ENCODE measurements at regions of chr14 and their contacts with region 1.

Region 1: DNA sequence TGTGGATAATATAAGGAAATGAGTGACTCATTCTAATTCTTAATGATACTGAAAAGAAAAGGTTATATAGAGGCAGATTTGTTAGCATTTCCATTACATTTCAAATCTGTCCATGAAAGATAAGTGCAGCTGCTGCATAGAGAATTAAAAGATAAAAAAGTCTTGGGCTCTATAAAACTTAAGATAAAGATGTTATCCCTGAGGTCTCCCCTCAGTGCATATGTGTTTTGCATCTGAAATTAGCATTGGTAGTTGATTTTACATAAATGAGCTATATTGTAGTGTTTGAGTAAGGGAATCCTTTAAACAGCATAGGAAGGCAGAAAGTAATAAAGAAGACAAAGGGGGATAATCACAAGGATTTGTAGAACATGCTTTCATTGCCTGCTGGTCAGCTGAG is 206.2 kb downstream of the FSCB start:
- DNase-seq: no peak
- H3K4me3 ChIP-seq: no peak overlapping the region
- H3K27ac ChIP-seq: no peak overlapping the region
- H3K4me1 ChIP-seq: no peaks in the 10 kb centered on the region
- H3K27me3 ChIP-seq: no peaks in the 10 kb centered on the region
- CTCF ChIP-seq: no peak
- EP300 ChIP-seq: no peak
- POLR2A ChIP-seq: no peak

Region 2: DNA sequence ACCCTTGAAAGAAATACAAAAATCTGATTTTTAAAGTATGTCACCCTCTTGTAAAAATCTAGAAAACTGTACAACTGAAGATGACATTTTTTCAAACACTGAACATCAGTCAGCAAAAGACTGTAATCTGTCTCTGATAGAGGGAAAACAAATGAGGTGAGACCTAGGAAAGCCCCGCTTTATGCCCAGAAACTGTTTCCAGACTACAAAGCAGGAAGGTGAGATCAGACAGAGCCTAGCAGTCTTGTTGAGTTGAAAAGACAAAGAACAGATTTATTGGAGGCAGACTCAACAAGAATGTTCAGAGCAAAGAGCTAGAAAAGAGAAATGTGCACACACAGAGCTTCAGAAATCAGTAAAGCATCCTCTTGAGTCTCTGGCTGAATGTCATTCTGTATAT is 1820.7 kb before region 1 on chr14:
- intact Hi-C with region 1: no loop called
- DNase-seq: no peak
- H3K4me3 ChIP-seq: no peak overlapping the region
- H3K27ac ChIP-seq: no peak overlapping the region
- H3K4me1 ChIP-seq: no peaks in the 10 kb centered on the region
- H3K27me3 ChIP-seq: no peaks in the 10 kb centered on the region
- CTCF ChIP-seq: no peak
- EP300 ChIP-seq: no peak
- POLR2A ChIP-seq: no peak

Region 3: DNA sequence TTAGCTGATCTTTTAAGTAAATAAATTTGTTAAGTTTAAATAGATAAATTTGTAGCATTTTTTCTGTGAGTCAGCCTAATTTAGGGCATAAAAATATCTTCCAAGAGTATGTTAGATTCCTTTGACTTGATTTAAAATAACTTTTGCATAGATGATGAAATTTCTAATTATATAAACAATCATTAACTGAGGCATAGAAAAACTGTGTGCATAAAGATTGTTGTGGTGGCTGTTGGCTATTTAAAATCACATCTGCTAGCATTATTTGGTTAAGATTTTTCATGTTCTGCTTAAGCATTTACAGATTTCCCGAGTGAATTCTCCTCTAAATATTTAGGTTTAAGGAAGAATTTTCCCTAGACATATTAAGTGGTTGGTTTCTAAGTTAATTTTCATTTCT is 17.1 kb before region 1 on chr14:
- intact Hi-C with region 1: loop called in 1 of 4 experiments (anchors 2 kb)
- DNase-seq: no peak
- H3K4me3 ChIP-seq: no peak overlapping the region
- H3K27ac ChIP-seq: no peak overlapping the region
- H3K4me1 ChIP-seq: no peaks in the 10 kb centered on the region
- H3K27me3 ChIP-seq: no peaks in the 10 kb centered on the region
- CTCF ChIP-seq: no peak
- EP300 ChIP-seq: no peak
- POLR2A ChIP-seq: no peak

Measured in ovary (tissue), 10 donors.